SK-N-SH (cell line): ENCODE measurements at regions of chr19 and their contacts with region 1.

Region 1: GRCh38 chr19:16041299-16041990 is 34.9 kb upstream of the TPM4 start:
- DNase-seq: peak; percentile 90
- H3K4me3 ChIP-seq: peak overlapping the region in 1 of 2 experiments; percentile 42; a peak in 1 of 4 replicates
- H3K27ac ChIP-seq: no peak overlapping the region
- H3K4me1 ChIP-seq: no peaks in the 10 kb centered on the region; a peak in 1 of 4 replicates
- H3K27me3 ChIP-seq: peaks cover 8% of the 10 kb centered on the region; the same call in 1 of the 2 replicates
- CTCF ChIP-seq: peak; percentile 98
- EP300 ChIP-seq: no peak
- RAD21 ChIP-seq: peak; percentile 92

Region 2: GRCh38 chr19:15971222-15971780 is 70.1 kb before region 1 on chr19:
- CTCF ChIA-PET with region 1: no interaction called
- POLR2A ChIA-PET with region 1: no interaction called
- DNase-seq: no peak
- H3K4me3 ChIP-seq: no peak overlapping the region
- H3K27ac ChIP-seq: no peak overlapping the region
- H3K4me1 ChIP-seq: no peaks in the 10 kb centered on the region
- H3K27me3 ChIP-seq: peaks cover 8% of the 10 kb centered on the region; the same call in 1 of the 2 replicates
- CTCF ChIP-seq: no peak
- EP300 ChIP-seq: no peak
- RAD21 ChIP-seq: no peak

Region 3: DNA sequence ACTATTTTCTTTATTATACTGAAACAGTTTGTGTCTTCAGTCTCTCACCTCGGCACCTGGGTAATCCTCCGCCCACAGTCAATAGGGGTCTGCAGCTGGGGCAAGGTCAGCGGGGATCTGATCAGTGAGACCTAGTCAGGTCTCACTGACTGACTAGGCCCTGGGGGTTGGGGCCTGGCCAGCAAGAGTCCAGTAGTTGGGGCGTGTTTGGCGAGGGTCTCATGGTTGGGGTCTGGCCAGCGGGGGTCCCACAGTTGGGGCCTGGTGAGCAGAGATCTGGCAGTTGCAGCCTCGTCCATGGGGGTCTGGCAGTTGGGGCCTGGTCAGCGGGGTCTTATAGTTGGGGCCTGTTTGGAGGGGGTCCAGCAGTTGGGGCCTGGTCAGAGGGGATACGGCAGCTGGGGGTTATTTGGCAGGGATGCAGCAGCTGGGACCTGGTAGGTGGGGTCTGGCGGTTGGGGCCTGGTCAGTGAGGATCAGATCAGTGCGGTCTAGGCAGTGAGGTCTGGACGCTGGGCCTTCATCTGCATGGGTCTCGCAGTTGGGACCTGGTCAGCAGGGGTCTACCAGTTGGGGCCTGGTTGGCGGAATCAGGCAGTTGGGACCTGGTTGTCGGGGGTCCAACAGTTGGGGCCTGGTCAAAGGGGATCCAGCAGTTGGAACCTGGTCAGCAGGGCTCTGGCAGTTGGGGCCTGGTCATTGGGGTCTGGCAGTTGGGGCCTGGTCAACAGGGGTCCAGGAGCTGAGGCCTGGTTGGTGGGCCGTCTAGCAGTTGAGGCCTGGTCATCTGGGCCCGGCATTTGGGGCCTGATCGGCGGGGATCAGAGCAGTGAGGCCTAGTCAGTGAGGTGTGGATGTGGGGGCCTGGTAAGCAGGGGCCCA is 26.3 kb before region 1 on chr19:
- CTCF ChIA-PET with region 1: no interaction called
- POLR2A ChIA-PET with region 1: no interaction called
- DNase-seq: peak; percentile 4
- H3K4me3 ChIP-seq: no peak overlapping the region
- H3K27ac ChIP-seq: no peak overlapping the region
- H3K4me1 ChIP-seq: no peaks in the 10 kb centered on the region
- H3K27me3 ChIP-seq: no peaks in the 10 kb centered on the region; the same call in 1 of the 2 replicates
- CTCF ChIP-seq: no peak
- EP300 ChIP-seq: no peak
- RAD21 ChIP-seq: no peak

Region 4: GRCh38 chr19:16025108-16026101 is 16.0 kb before region 1 on chr19:
- CTCF ChIA-PET with region 1: interaction called, 19 read pairs
- POLR2A ChIA-PET with region 1: no interaction called
- DNase-seq: peak; percentile 61
- H3K4me3 ChIP-seq: no peak overlapping the region
- H3K27ac ChIP-seq: no peak overlapping the region
- H3K4me1 ChIP-seq: no peaks in the 10 kb centered on the region
- H3K27me3 ChIP-seq: no peaks in the 10 kb centered on the region; the same call in 1 of the 2 replicates
- CTCF ChIP-seq: peak; percentile 59
- EP300 ChIP-seq: no peak
- RAD21 ChIP-seq: peak; percentile 35; the same call in 1 of the 2 replicates

Region 5: GRCh38 chr19:16070366-16070990 is 29.0 kb after region 1 on chr19:
- CTCF ChIA-PET with region 1: interaction called, 37 read pairs
- POLR2A ChIA-PET with region 1: no interaction called
- DNase-seq: no peak
- H3K4me3 ChIP-seq: no peak overlapping the region
- H3K27ac ChIP-seq: no peak overlapping the region
- H3K4me1 ChIP-seq: no peaks in the 10 kb centered on the region; a peak in 2 of 4 replicates
- H3K27me3 ChIP-seq: no peaks in the 10 kb centered on the region
- CTCF ChIP-seq: no peak
- EP300 ChIP-seq: no peak
- RAD21 ChIP-seq: no peak

Region 6: GRCh38 chr19:16088351-16089009 is 47.0 kb after region 1 on chr19:
- CTCF ChIA-PET with region 1: interaction called, 10 read pairs
- POLR2A ChIA-PET with region 1: no interaction called
- DNase-seq: no peak
- H3K4me3 ChIP-seq: no peak overlapping the region
- H3K27ac ChIP-seq: no peak overlapping the region
- H3K4me1 ChIP-seq: no peaks in the 10 kb centered on the region
- H3K27me3 ChIP-seq: no peaks in the 10 kb centered on the region
- CTCF ChIP-seq: no peak; the same call in 1 of the 2 replicates
- EP300 ChIP-seq: no peak
- RAD21 ChIP-seq: no peak

Region 7: GRCh38 chr19:16185123-16185767 is 143.8 kb after region 1 on chr19 and contains the start of gene FAM32A:
- CTCF ChIA-PET with region 1: interaction called, 59 read pairs
- POLR2A ChIA-PET with region 1: interaction called, 4 read pairs
- DNase-seq: peak; percentile 96
- H3K4me3 ChIP-seq: peak within 1 kb of the TSS; percentile 73 to 99
- H3K27ac ChIP-seq: peak within 1 kb of the TSS; percentile 77 to 80
- H3K4me1 ChIP-seq: peaks cover 3 to 7% of the 10 kb centered on the region in 2 experiments; a peak in 2 of 4 replicates
- H3K27me3 ChIP-seq: no peaks in the 10 kb centered on the region
- CTCF ChIP-seq: no peak; the same call in 1 of the 2 replicates
- EP300 ChIP-seq: no peak
- RAD21 ChIP-seq: no peak
- polyA plus RNA-seq, gene FAM32A: 156 and 192 TPM in 2 replicates

Region 8: GRCh38 chr19:16272945-16273344 is 231.5 kb after region 1 on chr19:
- CTCF ChIA-PET with region 1: no interaction called
- POLR2A ChIA-PET with region 1: no interaction called
- DNase-seq: no peak
- H3K4me3 ChIP-seq: no peak overlapping the region
- H3K27ac ChIP-seq: no peak overlapping the region
- H3K4me1 ChIP-seq: no peaks in the 10 kb centered on the region
- H3K27me3 ChIP-seq: peaks cover 35% of the 10 kb centered on the region
- CTCF ChIP-seq: no peak
- EP300 ChIP-seq: no peak
- RAD21 ChIP-seq: no peak